ENCODE measurements at regions of chr1 and their contacts with region 1.

Region 1: GRCh38 chr1:156987715-156988114 is 57.8 kb downstream of the ARHGEF11 start:
- DNase-seq: no peak
- ATAC-seq: no peak

Region 2: DNA sequence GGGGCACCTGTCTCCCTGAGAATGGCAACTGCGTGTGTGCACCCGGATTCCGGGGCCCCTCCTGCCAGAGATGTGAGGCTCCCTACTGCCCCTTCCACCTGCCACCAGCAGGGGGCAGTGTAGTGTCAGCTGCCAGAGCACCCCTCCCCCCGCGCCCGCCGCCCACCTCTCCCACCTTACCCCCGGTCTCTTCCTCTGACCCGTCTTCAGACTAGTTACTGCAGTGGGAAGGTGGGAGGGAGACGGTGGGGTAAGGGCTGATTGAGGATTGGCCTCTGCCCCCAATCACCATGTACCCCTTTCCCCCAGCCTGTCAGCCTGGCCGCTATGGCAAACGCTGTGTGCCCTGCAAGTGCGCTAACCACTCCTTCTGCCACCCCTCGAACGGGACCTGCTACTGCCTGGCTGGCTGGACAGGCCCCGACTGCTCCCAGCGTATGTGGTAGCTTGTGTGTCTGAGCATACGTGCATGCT is 77.4 kb before region 1 on chr1:
- intact Hi-C with region 1: no loop called
- DNase-seq: peak; percentile 60
- ATAC-seq: peak; percentile 31

Region 3: DNA sequence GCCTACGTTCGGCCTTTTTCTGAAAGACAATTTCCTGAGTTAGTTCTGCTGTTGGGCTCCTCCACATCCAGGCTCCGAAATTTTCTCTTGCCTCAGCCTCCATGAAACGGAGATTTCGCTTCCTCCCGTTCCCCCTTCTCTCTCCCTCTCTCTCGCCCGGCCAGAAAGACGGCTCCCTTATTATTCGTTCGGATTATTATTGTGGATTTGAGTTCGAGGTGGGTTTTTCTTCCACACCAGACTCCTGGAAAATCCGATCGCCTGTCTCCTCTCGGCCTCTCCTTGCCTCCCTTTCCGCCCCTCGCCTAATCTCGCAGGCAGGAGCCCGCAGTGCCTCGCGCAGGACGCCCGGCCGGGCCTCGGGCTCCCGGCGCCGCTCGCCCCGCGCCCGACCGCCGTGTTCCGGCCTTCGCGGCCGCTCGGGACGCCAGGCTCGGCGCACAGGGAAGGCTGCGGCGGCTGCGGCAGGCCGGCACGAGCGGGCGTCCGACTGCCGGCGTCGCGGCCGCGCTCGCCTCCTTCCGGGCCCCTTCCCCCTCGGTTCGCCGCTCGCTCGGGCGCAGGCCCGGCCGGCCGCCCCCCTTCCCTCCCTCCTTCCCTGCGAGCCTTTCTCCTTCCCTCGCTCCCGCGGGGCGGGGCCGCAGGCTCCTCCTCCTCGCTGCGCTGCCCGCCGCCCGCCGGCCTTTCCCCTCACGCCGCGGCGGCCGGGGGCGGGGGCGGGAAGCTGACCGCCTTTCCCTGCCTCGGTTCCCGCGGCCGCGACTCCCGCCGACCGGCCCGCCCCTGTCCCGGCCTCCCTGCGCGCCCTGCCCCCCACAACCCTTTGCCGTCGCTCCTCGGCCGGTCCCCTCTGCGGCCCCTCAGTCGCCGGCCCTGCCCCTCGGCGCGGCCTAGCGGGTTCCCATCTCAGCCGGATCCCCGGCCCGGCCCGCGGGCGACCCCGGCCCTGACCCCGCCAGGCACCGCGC is 57.8 kb after region 1 on chr1 and contains the start of gene ARHGEF11:
- intact Hi-C with region 1: loop called (anchors 10 kb)
- DNase-seq: peak; percentile 95
- ATAC-seq: peak; percentile 98
- total RNA-seq, gene ARHGEF11: 29.9 TPM

Region 4: DNA sequence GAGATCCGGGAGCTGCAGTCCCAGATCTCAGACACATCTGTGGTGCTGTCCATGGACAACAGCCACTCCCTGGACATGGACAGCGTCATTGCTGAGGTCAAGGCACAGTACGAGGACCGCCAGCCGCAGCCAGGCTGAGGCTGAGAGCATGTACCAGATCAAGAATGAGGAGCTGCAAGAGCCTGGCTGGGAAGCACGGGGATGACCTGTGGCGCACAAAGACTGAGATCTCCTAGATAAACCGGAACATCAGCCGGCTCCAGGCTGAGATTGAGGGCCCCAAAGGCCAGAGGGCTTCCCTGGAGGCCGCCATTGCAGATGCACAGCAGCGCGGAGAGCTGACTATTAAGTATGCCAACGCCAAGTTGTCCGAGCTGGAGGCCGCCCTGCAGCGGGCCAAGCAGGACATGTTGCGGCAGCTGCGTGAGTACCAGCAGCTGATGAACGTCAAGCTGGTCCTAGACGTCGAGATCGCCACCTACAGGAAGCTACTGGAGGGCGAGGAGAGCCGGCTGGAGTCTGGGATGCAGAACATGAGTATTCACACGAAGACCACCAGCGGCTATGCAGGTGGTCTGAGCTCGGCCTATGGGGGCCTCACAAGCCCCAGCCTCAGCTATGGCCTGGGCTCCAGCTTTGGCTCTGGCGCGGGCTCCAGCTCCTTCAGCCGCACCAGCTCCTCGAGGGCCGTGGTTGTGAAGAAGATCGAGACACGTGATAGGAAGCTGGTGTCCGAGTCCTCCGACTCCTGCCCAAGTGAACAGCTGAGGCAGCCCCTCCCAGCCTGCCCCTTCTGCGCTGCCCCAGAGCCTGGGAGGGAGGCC is 86.4 kb after region 1 on chr1:
- intact Hi-C with region 1: loop called (anchors 10 kb)
- DNase-seq: peak; percentile 86
- ATAC-seq: peak; percentile 70

Region 5: GRCh38 chr1:157176591-157177121 is 188.9 kb after region 1 on chr1:
- intact Hi-C with region 1: no loop called
- DNase-seq: no peak
- ATAC-seq: no peak

Measured in Right ventricle myocardium superior (tissue), 1 donor.